Activated CD4-positive, alpha-beta T cell treated with anti-CD3 and anti-CD28 coated beads for 36 hours (primary cell): ENCODE measurements at regions of chr3 and their contacts with region 1.

Region 1: DNA sequence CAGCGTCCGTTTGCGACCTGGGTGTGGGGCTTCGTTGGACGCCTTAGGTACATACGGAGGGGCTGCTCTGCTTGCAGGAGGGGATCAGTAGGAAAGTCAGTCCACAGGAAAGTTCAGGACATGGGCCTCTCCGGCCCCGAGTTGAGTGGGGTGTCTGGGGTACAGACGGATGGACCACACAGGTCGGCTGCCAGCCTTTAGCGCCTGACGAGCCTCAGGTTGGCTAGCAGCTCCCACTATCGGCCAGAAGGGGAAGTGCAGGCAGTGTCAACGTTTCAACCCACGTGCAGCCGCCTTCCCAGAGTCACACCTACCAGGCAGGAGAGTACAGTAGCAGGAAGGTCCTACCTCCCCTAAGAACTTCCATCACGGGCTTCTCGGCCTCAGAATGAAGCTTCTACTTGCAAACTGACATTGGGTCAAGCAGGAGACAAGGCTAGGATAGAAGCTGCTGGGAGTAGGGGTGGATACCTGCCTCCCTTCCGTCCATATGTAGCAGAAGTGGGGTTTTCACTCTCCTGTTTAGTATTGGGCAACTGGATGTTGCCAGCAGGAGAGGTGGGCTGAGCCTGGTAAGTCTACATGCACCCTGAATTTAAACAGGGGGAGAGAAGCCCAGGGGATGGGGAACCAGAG is 1.8 kb upstream of the SCN5A start:
- DNase-seq: peak; percentile 83
- ATAC-seq: peak; percentile 60
- H3K4me3 Mint-ChIP-seq: no peak overlapping the region
- H3K27ac Mint-ChIP-seq: no peak overlapping the region
- H3K4me1 Mint-ChIP-seq: peaks cover 13% of the 10 kb centered on the region
- H3K27me3 Mint-ChIP-seq: peaks cover 5% of the 10 kb centered on the region

Region 2: GRCh38 chr3:37974121-37975083 is 676.9 kb before region 1 on chr3:
- CTCF ChIA-PET with region 1: interaction called, 4 read pairs
- POLR2A ChIA-PET with region 1: no interaction called
- intact Hi-C with region 1: loop called in 1 of 2 experiments (anchors 5 kb)
- DNase-seq: peak; percentile 83
- ATAC-seq: peak; percentile 98
- H3K4me3 Mint-ChIP-seq: no peak overlapping the region
- H3K27ac Mint-ChIP-seq: no peak overlapping the region
- H3K4me1 Mint-ChIP-seq: peaks cover 2% of the 10 kb centered on the region
- H3K27me3 Mint-ChIP-seq: no peaks in the 10 kb centered on the region

Region 3: DNA sequence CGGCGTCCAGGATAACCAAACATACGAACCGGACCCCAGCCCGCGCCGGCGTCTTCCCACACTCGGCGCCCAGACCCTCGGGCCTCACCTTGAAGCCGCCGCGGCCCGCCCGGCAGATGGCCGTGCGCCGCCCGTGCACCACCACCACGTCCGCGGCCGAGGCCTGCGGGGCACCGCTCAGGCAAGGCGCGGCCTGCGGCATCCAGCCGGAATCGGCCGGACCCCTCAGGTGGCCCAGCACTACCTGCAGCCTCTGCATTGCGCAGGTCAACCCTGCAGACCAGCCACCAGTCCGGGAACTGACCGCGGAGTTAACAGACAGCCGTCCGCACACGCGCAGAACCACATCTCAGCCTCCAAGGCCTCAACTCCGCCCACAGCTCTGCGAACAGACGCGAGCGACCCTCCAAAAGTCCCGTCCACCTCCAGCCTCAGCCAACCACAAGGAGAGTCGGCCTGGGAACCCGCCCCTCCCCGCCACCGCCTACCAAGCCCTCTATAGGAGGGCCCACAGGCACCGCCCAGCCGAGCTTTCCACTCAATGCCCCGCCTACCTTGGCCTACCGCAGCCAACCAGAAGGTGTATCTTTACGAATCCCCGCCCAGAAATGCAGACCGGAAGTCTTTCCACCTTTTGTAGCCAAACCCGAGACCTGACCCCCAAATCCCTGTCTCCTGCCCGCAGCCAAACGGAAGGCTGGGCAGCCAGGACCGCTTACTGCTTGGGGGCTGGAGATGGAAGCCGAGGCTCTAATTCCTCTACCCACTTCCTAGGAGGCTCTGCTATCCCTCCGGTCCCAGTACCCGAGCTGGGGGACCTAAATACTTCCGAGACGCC is 514.3 kb before region 1 on chr3 and contains the start of gene ACAA1:
- CTCF ChIA-PET with region 1: interaction called, 4 read pairs
- POLR2A ChIA-PET with region 1: no interaction called
- intact Hi-C with region 1: loop called in 1 of 2 experiments (anchors 1 kb)
- DNase-seq: peak; percentile 99
- ATAC-seq: peak; percentile 95
- H3K4me3 Mint-ChIP-seq: peak within 1 kb of the TSS; percentile 97
- H3K27ac Mint-ChIP-seq: peak within 1 kb of the TSS; percentile 100
- H3K4me1 Mint-ChIP-seq: peaks cover 53% of the 10 kb centered on the region
- H3K27me3 Mint-ChIP-seq: no peaks in the 10 kb centered on the region
- total RNA-seq, gene ACAA1: 52.2 to 64.6 TPM

Region 4: GRCh38 chr3:38453075-38453912 is 198.0 kb before region 1 on chr3 and contains the start of gene ACVR2B:
- CTCF ChIA-PET with region 1: no interaction called
- POLR2A ChIA-PET with region 1: no interaction called
- intact Hi-C with region 1: loop called in 1 of 2 experiments (anchors 1 kb)
- DNase-seq: peak; percentile 85
- ATAC-seq: peak; percentile 71
- H3K4me3 Mint-ChIP-seq: peak within 1 kb of the TSS; percentile 87
- H3K27ac Mint-ChIP-seq: peak within 1 kb of the TSS; percentile 81
- H3K4me1 Mint-ChIP-seq: peaks cover 9% of the 10 kb centered on the region
- H3K27me3 Mint-ChIP-seq: peaks cover 2% of the 10 kb centered on the region
- total RNA-seq, gene ACVR2B: 5.7 to 6.9 TPM

Region 5: GRCh38 chr3:38521391-38521987 is 129.8 kb before region 1 on chr3:
- CTCF ChIA-PET with region 1: interaction called, 102 read pairs
- POLR2A ChIA-PET with region 1: no interaction called
- intact Hi-C with region 1: loop called (anchors 1 kb)
- DNase-seq: peak; percentile 75
- ATAC-seq: peak; percentile 74
- H3K4me3 Mint-ChIP-seq: no peak overlapping the region
- H3K27ac Mint-ChIP-seq: no peak overlapping the region
- H3K4me1 Mint-ChIP-seq: peaks cover 23% of the 10 kb centered on the region
- H3K27me3 Mint-ChIP-seq: no peaks in the 10 kb centered on the region

Region 6: DNA sequence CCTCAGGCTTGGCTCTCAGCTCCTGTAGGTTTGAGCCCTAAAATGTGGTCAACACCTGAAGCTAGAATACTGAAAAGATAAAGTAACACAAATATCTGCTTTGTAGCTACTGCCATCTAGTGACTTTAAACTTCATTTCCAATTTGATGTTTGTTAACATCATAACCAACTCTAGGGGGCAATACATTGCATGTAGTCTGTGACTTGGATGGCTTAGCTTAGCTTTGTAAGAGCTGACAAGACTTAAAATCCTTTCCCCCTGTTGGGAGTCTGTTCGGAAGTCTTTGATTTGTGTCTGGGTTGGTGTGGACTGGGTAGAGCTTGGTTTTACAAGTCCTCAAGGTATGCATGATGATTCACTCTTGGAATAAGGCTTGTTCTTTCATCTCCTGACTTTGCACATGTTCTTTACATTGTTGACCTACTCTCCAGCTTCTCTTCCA is 348.8 kb after region 1 on chr3:
- CTCF ChIA-PET with region 1: interaction called, 6 read pairs
- POLR2A ChIA-PET with region 1: no interaction called
- intact Hi-C with region 1: loop called in 1 of 2 experiments (anchors 2 kb)
- DNase-seq: no peak
- ATAC-seq: peak; percentile 71
- H3K4me3 Mint-ChIP-seq: no peak overlapping the region
- H3K27ac Mint-ChIP-seq: no peak overlapping the region
- H3K4me1 Mint-ChIP-seq: no peaks in the 10 kb centered on the region
- H3K27me3 Mint-ChIP-seq: no peaks in the 10 kb centered on the region

Region 7: DNA sequence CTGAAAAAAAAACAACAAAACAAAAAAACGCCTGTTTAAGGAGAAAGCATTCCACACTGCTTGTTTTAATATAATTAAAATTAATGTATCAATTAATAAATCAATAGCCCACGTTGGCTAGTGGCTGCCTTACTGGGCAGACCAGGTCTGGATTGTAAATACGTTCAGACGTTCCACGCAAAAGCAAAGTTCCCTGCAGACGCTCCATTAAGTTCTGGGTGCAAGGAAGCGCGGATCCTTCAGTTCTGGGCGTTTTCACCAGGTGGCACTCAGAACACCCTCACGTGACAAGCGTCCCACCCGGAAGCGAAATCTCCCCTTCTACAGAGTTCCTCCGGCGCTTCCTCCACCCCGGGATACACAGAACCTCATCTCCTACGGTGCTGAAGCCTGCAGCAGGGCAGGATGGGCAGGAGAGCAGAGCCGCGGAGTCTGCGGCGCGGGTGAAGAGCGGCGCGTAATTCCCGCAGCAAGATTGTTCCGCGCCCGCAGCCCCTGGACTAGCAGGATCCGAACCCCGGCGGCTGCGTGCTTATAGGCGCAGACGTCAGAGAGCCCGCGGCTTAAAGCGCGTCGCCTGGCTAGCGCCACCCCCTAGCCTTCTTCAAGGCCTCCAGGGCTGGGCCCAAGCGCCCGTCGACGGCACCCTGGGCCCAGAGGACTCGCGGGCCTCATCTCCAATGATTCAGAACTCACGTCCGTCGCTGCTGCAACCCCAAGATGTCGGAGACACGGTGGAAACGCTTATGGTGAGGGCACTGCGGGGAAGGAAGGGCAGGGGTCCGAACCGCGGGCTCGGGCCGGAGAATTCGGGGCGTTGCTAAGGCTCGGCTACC is 732.0 kb after region 1 on chr3 and contains the start of gene SLC25A38:
- CTCF ChIA-PET with region 1: no interaction called
- POLR2A ChIA-PET with region 1: no interaction called
- intact Hi-C with region 1: loop called in 1 of 2 experiments (anchors 10 kb)
- DNase-seq: peak; percentile 91
- ATAC-seq: peak; percentile 88
- H3K4me3 Mint-ChIP-seq: peak within 1 kb of the TSS; percentile 97
- H3K27ac Mint-ChIP-seq: peak within 1 kb of the TSS; percentile 97
- H3K4me1 Mint-ChIP-seq: peaks cover 43% of the 10 kb centered on the region
- H3K27me3 Mint-ChIP-seq: no peaks in the 10 kb centered on the region
- total RNA-seq, gene SLC25A38: 23.0 to 24.8 TPM